Activated naive CD8-positive, alpha-beta T cell treated with anti-CD3 and anti-CD28 coated beads, Interleukin-2, amount 10 ng/mL, durations not matched to agents 7 days and 5 days (primary cell): ENCODE measurements at regions of chr2 and their contacts with region 1.

Region 1: DNA sequence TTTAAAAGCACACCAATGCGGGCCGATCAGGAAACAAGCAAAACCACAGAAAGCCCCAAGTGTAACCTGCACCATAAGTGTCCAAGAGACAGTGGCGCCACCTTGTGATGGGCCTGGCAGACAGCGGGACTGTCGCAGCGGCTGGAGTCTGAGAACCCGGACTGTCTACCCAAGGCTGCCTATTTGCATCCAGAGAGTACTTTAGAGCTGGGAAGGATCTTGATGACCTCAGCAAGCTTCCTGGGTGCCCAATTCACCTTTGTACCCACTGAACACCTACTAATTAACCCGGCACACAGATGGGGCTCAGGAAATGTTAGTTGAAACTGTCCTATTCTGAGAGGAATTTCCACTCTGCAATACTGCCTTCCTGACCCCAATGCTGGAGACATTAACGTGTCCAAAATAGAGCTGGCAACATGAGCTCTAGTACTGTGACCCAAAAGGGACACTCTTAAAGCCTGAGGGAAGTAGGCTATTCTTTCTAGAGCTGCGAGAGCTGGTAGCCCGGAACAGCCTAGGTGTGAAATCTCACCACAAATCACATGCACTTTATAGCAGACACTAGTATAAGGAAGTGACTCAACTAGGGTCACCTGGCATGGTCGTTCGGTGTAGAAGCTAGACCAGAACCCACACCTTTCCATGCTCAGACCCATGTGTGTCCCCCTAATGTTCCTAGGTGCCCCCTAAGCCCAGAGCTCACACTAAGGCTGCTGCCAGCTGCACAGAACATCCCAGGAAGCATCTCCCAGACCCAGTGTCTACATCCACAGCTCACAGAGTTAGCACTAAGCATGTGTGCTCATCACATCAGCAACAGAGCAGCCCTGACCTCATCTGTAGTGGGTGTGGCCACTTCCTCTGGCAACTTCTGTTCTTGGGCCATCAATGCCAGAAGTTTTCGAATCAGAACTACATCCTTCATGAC is 25.4 kb downstream of the POLR1A start:
- DNase-seq: peak; percentile 87
- ATAC-seq: peak; percentile 78
- H3K4me3 Mint-ChIP-seq: no peak overlapping the region
- H3K27ac Mint-ChIP-seq: peak overlapping the region; percentile 76
- H3K4me1 Mint-ChIP-seq: peaks cover 37% of the 10 kb centered on the region
- H3K27me3 Mint-ChIP-seq: no peaks in the 10 kb centered on the region

Region 2: DNA sequence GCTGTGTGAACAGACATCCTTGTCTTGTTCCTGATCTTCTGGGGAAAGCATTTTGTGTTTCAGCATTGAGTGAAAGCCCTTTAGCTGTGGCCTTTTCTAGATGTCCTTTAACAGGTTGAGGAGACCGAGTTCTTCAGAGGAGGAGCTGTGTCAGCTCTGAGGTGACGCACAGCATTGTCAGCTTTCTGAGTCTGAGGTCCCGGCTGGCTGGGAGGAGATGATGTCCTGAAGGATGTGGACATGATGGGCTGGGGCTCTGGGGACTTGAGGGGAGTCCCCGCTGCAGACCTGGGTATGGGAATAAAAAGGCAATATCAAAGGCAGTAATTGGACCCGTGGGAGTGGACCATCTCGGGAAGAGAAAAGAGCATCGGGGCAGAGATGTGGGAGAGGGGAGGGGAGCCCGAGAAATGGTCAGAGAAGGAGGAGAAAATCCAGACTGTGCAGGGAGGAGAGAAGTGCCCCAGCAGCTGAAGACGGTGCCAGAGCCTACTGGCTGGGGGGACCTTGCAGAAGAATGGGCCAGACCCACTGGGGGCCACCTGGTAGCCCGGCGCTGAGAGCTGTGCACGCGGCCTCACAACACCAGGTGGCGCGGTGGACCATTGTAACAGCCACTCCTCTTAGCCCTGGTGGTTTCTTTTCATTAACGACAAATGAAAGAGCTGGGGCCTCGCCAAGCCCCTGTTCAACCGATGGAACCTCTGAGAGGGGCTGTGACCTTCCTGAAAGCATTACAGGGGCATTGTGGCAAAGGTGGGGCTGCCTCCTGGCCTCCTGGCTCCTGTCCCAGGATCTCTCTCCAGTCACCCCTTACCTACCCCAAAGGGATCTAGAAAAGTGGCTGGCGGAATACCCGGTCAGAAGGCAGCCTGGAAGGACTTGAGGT is 253.0 kb before region 1 on chr2:
- POLR2A ChIA-PET with region 1: interaction called, 31 read pairs
- DNase-seq: peak; percentile 89
- ATAC-seq: peak; percentile 94
- H3K4me3 Mint-ChIP-seq: peak overlapping the region; percentile 55
- H3K27ac Mint-ChIP-seq: peak overlapping the region; percentile 93
- H3K4me1 Mint-ChIP-seq: peaks cover 24% of the 10 kb centered on the region
- H3K27me3 Mint-ChIP-seq: peaks cover 28% of the 10 kb centered on the region

Region 3: GRCh38 chr2:86028766-86029381 is 51.4 kb before region 1 on chr2:
- POLR2A ChIA-PET with region 1: no interaction called
- DNase-seq: no peak
- ATAC-seq: no peak
- H3K4me3 Mint-ChIP-seq: no peak overlapping the region
- H3K27ac Mint-ChIP-seq: peak overlapping the region; percentile 64
- H3K4me1 Mint-ChIP-seq: peaks cover 9% of the 10 kb centered on the region
- H3K27me3 Mint-ChIP-seq: no peaks in the 10 kb centered on the region

Region 4: DNA sequence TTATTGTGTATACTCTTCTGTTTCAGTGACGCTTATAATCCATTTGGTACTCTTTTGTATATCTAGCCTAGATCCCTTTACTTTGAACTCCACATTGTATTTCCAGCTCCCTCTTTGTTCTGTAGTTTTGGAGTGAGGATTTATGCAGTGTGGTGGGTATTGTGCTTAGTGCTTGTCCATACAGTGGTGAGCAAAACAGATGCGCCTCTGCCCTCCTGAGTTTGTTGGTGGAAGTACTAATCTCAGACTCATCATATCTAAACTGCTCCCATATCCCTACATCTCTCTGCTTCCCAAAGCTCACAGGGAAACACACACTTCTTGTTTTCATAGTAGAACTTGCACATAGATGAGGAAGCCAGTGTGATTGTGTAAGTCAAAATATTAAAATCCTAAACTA is 37.9 kb after region 1 on chr2:
- POLR2A ChIA-PET with region 1: no interaction called
- DNase-seq: no peak
- ATAC-seq: no peak
- H3K4me3 Mint-ChIP-seq: no peak overlapping the region
- H3K27ac Mint-ChIP-seq: no peak overlapping the region
- H3K4me1 Mint-ChIP-seq: peaks cover 3% of the 10 kb centered on the region
- H3K27me3 Mint-ChIP-seq: no peaks in the 10 kb centered on the region